Natural killer cell (primary cell): ENCODE measurements at regions of chr9 and their contacts with region 1.

Region 1: GRCh38 chr9:6757456-6758247 is at the start of gene KDM4C:
- DNase-seq: peak; percentile 94 to 98
- ATAC-seq: peak; percentile 75 to 93 (median 83)
- H3K4me3 ChIP-seq: peak within 1 kb of the TSS; percentile 70
- H3K4me3 Mint-ChIP-seq: peak within 1 kb of the TSS; percentile 97
- H3K27ac ChIP-seq: peak within 1 kb of the TSS; percentile 96
- H3K27ac Mint-ChIP-seq: peak within 1 kb of the TSS; percentile 98 to 99
- H3K4me1 ChIP-seq: peaks cover 16% of the 10 kb centered on the region
- H3K4me1 Mint-ChIP-seq: peaks cover 29 to 47% of the 10 kb centered on the region in 2 donors
- H3K27me3 ChIP-seq: no peaks in the 10 kb centered on the region
- H3K27me3 Mint-ChIP-seq: no peaks in the 10 kb centered on the region
- CTCF ChIP-seq: no peak
- total RNA-seq, gene KDM4C: 115 to 137 (median 116) TPM

Region 2: DNA sequence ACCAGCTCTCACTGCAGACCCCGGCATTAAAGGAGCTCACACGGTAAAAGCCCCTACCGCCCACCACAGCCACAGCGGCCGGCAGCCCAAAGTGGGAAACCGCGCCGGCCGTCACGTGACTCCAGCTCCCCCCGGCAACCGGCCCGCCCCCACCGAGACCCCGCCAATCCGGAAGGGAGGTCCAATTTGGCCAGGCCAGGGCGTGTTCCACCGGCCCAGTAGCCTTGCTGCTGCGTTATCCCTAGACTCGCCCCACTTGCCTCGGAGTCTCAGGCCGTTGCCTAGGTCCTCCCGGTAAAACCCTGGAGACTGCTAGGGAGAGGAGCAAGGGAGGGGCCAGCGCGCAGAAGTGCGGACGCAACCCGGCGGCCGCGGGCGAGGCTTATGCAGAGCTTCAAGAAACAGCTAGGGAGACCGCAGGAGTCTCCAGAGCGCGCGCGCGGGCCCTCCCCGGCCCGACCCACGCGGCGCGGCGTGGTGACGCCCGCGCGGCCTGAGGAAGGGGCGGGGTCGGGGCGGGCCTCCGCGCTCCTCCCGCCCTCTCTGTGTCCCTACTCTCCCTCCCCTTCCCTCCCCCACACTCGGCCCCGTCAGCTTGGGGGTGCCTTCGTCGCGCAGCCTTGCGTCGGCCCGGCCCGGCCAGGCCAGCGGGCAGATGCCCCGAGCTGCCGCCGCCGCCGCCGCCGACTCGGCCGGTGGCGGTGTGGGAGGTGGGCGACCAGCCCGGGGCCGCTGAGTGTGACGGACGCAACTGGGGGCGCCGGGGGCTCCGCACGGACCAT is 1128.9 kb before region 1 on chr9 and contains the start of gene RIC1:
- intact Hi-C with region 1: loop called (anchors 5 kb)
- DNase-seq: peak; percentile 89 to 94
- ATAC-seq: peak; percentile 87 to 97 (median 88)
- H3K4me3 ChIP-seq: peak within 1 kb of the TSS; percentile 99
- H3K4me3 Mint-ChIP-seq: peak within 1 kb of the TSS; percentile 99
- H3K27ac ChIP-seq: peak within 1 kb of the TSS; percentile 92
- H3K27ac Mint-ChIP-seq: peak within 1 kb of the TSS; percentile 93
- H3K4me1 ChIP-seq: peaks cover 27% of the 10 kb centered on the region
- H3K4me1 Mint-ChIP-seq: peaks cover 49 to 57% of the 10 kb centered on the region in 2 donors
- H3K27me3 ChIP-seq: no peaks in the 10 kb centered on the region
- H3K27me3 Mint-ChIP-seq: no peaks in the 10 kb centered on the region
- CTCF ChIP-seq: no peak
- total RNA-seq, gene RIC1: 23.5 to 33.9 (median 31.8) TPM

Region 3: DNA sequence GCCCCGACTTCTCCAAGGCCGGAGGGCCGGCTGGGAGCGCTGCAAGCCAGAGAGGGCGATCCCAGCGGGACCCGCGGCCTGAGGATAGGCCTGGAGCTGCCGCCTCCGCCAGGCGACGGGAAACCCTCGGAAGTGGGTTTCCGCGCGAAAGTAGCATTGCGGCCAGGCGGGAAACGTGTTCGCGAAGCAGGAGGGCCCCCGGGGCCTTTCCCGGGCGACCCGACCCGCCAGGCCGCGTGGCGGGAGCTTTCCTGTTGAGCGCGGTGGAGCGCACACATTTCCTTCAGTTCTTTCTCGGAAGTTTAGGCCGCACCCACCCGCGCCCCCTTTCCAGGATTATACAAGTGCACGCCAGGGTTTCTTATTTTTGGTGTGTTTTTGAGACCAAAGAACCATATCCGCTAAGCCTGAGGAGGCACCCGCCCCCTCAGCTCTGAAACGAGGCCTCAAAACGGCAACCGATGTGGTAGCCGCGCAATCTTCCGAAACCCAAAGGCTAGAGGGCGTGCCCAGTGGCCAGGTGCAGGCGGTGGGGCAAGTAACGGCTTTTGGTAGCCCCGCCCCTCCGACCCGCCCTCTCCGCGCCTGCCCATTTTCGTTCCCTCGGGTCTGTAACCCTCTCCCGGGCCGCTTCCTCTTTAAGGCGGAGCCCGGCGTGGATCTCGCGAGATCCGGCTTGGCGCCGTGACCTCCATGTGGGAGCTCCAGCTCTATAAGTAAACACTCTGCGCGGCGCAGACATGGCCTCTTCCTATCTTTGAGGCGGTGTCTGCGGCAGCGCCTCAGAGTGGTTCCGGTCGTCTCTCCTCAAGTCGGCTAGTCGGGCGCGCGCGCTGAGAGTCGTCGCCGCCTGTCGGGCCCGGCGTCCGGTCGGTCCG is 344.9 kb before region 1 on chr9 and contains the start of gene UHRF2:
- intact Hi-C with region 1: loop called (anchors 5 kb)
- DNase-seq: peak; percentile 90 to 99
- ATAC-seq: peak; percentile 90 to 97 (median 92)
- H3K4me3 ChIP-seq: peak within 1 kb of the TSS; percentile 94
- H3K4me3 Mint-ChIP-seq: peak within 1 kb of the TSS; percentile 92
- H3K27ac ChIP-seq: peak within 1 kb of the TSS; percentile 80
- H3K27ac Mint-ChIP-seq: peak within 1 kb of the TSS; percentile 85 to 86
- H3K4me1 ChIP-seq: peaks cover 16% of the 10 kb centered on the region
- H3K4me1 Mint-ChIP-seq: peaks cover 29 to 35% of the 10 kb centered on the region in 2 donors
- H3K27me3 ChIP-seq: no peaks in the 10 kb centered on the region
- H3K27me3 Mint-ChIP-seq: no peaks in the 10 kb centered on the region
- CTCF ChIP-seq: no peak
- total RNA-seq, gene UHRF2: 118 to 130 (median 120) TPM

Region 4: GRCh38 chr9:6703898-6704639 is 53.6 kb before region 1 on chr9:
- intact Hi-C with region 1: loop called (anchors 1 kb)
- DNase-seq: peak; percentile 83 to 94
- ATAC-seq: peak; percentile 84 to 94 (median 93)
- H3K4me3 ChIP-seq: peak overlapping the region; percentile 99
- H3K4me3 Mint-ChIP-seq: peak overlapping the region; percentile 96
- H3K27ac ChIP-seq: peak overlapping the region; percentile 96
- H3K27ac Mint-ChIP-seq: peak overlapping the region; percentile 92 to 99
- H3K4me1 ChIP-seq: peaks cover 16% of the 10 kb centered on the region
- H3K4me1 Mint-ChIP-seq: peaks cover 7 to 9% of the 10 kb centered on the region in 2 donors
- H3K27me3 ChIP-seq: no peaks in the 10 kb centered on the region
- H3K27me3 Mint-ChIP-seq: peaks cover 0 to 3% of the 10 kb centered on the region in 2 donors
- CTCF ChIP-seq: no peak

Region 5: GRCh38 chr9:6818320-6818922 is 60.8 kb after region 1 on chr9:
- intact Hi-C with region 1: no loop called
- DNase-seq: no peak
- ATAC-seq: no peak
- H3K4me3 ChIP-seq: no peak overlapping the region
- H3K4me3 Mint-ChIP-seq: no peak overlapping the region
- H3K27ac ChIP-seq: no peak overlapping the region
- H3K27ac Mint-ChIP-seq: peak overlapping the region in 1 of 2 donors; percentile 25
- H3K4me1 ChIP-seq: no peaks in the 10 kb centered on the region
- H3K4me1 Mint-ChIP-seq: peaks cover 33 to 40% of the 10 kb centered on the region in 2 donors
- H3K27me3 ChIP-seq: no peaks in the 10 kb centered on the region
- H3K27me3 Mint-ChIP-seq: no peaks in the 10 kb centered on the region
- CTCF ChIP-seq: no peak

Region 6: DNA sequence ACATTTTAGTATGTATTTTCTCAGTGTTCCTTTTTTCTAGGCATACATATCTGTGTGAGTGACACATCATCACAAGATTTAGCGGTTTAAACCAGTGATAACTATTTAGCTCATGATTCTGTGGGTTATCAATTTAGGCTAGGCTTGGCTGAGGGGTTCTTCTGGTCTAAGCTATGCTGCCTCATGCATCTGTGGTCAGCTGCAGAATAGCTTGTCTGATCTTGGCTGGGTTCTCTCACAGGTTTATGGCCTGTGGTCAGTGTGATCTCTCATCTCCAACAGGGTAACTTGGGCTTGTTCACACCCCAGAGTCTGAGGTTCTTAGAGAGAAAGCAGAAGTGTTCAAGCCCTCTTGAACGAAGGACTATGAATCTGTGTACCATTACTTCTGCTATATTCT is 363.4 kb after region 1 on chr9:
- intact Hi-C with region 1: loop called (anchors 2 kb)
- DNase-seq: peak; percentile 22 to 48
- ATAC-seq: peak; percentile 88 to 94 (median 92)
- H3K4me3 ChIP-seq: no peak overlapping the region
- H3K4me3 Mint-ChIP-seq: peak overlapping the region; percentile 87
- H3K27ac ChIP-seq: peak overlapping the region; percentile 60
- H3K27ac Mint-ChIP-seq: peak overlapping the region; percentile 91 to 92
- H3K4me1 ChIP-seq: peaks cover 10% of the 10 kb centered on the region
- H3K4me1 Mint-ChIP-seq: peaks cover 44 to 53% of the 10 kb centered on the region in 2 donors
- H3K27me3 ChIP-seq: no peaks in the 10 kb centered on the region
- H3K27me3 Mint-ChIP-seq: no peaks in the 10 kb centered on the region
- CTCF ChIP-seq: no peak